ENCODE measurements at regions of chr9 and their contacts with region 1.

Region 1: DNA sequence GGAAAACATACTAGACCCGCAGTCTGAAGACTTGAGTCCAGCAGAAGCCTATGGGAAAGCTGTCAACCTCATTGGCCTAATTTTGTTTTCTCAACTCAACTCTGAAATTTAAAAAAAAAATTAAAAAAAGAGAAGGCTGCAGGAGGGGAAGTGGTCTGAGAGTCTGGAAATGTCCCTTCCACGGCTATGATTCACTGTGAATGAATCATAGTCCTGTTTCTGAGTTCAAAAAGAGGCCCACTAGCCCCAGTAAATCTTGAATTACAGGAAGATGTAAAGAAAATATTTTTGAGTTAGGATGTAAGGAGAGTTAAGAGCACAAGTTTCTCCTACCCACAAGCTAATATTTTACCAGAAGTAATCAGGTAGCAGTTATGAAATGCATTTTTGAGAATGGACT is 565.5 kb upstream of the DMAC1 start:
- DNase-seq: no peak
- H3K4me3 Mint-ChIP-seq: no peak overlapping the region
- H3K27ac Mint-ChIP-seq: no peak overlapping the region
- H3K4me1 Mint-ChIP-seq: peaks cover 7% of the 10 kb centered on the region
- H3K27me3 Mint-ChIP-seq: no peaks in the 10 kb centered on the region

Region 2: GRCh38 chr9:8429768-8430167 is 64.7 kb after region 1 on chr9:
- intact Hi-C with region 1: loop called (anchors 5 kb)
- DNase-seq: peak; percentile 54
- H3K4me3 Mint-ChIP-seq: no peak overlapping the region
- H3K27ac Mint-ChIP-seq: peak overlapping the region; percentile 42
- H3K4me1 Mint-ChIP-seq: peaks cover 22% of the 10 kb centered on the region
- H3K27me3 Mint-ChIP-seq: no peaks in the 10 kb centered on the region

Measured in activated CD4-positive, alpha-beta T cell treated with anti-CD3 and anti-CD28 coated beads, Interleukin-2, amount 10 ng/mL, durations not matched to agents 24 days and 14 days (primary cell).